ENCODE measurements at regions of chr10 and their contacts with region 1.

Region 1: DNA sequence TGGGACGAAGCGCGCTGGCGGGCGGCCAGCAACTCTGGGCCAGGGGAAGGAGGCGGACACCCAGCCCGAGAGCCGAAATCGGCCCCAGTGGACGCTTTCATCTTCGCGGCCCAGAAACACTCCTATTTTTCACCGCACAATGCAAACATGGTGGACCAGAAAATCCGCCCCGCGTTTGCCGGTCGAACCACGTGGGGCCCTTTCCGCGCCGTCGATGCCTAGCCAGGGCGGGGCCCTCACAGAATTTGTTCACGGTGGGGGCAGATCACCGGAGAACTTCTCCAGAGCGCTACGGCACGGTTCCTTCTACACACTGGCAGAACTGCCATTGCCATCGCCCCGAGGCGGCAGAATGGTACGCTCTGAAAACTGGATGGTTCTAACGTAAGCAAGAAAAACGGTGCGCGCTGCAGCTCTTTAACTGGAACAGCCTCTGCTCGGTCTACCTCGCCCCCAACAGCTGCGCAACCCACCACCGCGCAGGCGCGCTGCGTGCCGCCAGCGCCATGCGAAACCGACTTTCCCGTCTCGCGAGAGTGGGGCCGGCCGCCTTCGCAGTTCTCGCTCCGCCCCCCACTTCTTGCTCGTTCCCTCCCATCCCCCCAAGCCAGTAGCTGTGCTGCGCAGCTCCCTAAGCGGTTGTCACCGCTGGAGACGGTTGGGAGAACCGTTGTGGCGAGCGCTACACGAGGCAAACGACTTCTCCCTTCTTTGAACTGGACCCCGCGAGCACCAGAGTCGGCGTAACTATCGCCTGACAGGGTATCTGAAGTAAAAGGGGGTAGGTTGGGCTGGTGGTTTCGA is at the start of gene HNRNPH3:
- DNase-seq: peak; percentile 97 to 100 (median 98)
- ATAC-seq: peak; percentile 78
- H3K4me3 ChIP-seq: peak within 1 kb of the TSS; percentile 95
- H3K4me3 Mint-ChIP-seq: peak within 1 kb of the TSS; percentile 100
- H3K27ac ChIP-seq: peak within 1 kb of the TSS; percentile 94 to 97
- H3K27ac Mint-ChIP-seq: peak within 1 kb of the TSS; percentile 98
- H3K4me1 ChIP-seq: peaks cover 18% of the 10 kb centered on the region
- H3K4me1 Mint-ChIP-seq: peaks cover 52% of the 10 kb centered on the region
- H3K27me3 ChIP-seq: no peaks in the 10 kb centered on the region
- H3K27me3 Mint-ChIP-seq: no peaks in the 10 kb centered on the region
- CTCF ChIP-seq: no peak
- total RNA-seq, gene HNRNPH3: 227 to 228 TPM

Region 2: DNA sequence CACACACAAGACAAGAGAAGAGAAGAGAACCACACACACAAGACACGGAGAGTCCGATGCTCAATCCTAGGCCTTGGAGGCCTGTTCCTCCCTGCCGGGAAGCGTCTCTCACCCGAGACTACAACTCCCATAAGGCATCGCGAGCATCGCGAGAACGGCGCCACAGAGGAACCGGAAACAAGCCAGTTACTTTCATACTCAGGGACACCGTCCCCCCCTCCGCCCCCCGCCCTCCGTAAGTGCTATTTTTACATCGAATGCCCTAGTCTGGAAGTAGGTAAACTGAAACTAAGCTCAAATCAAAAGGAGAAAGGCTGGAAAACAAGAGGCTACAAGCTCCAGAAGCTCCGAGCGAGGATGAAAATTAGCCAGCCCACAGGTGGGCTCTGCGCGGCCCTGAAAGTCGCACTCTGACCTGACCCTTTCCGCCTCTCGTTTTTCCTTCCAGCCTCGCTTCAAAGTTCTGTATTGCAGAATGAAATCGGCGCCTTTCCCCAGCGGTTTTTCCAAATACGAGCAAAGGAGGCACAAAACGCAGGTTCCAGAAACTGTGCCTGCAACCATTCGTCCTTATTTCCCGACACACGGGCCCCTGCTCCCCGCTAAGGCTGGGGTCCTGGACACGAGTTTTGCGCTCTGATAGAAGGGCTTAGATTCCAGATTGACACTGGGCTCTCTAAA is 482.2 kb before region 1 on chr10:
- CTCF ChIA-PET with region 1: no interaction called
- POLR2A ChIA-PET with region 1: interaction called, 9 read pairs
- intact Hi-C with region 1: loop called in 1 of 2 experiments (anchors 5 kb)
- DNase-seq: peak; percentile 87 to 96 (median 93)
- ATAC-seq: peak; percentile 99
- H3K4me3 ChIP-seq: peak overlapping the region; percentile 91
- H3K4me3 Mint-ChIP-seq: peak overlapping the region; percentile 94
- H3K27ac ChIP-seq: peak overlapping the region; percentile 78 to 93
- H3K27ac Mint-ChIP-seq: peak overlapping the region; percentile 91
- H3K4me1 ChIP-seq: peaks cover 12% of the 10 kb centered on the region
- H3K4me1 Mint-ChIP-seq: peaks cover 9% of the 10 kb centered on the region
- H3K27me3 ChIP-seq: no peaks in the 10 kb centered on the region
- H3K27me3 Mint-ChIP-seq: no peaks in the 10 kb centered on the region
- CTCF ChIP-seq: no peak

Region 3: DNA sequence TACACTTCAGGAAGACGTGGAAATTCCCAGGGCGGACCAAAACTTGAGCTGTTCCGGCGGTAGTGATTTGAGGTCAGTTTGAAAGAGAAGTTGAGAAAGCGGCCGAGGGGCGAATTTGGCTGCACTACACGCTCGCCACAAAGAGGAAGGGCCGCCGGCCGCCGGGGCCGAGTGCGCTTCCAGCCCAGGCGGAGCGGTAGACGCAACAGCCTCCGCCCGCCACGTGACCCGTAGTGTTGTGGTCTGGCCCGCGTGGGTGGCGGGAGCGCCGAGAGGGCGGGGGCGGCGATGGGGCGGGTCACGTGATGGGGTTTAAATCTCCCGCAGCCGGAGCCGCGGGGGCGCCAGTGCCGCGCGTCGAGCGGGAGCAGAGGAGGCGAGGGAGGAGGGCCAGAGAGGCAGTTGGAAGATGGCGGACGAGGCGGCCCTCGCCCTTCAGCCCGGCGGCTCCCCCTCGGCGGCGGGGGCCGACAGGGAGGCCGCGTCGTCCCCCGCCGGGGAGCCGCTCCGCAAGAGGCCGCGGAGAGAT is 447.3 kb before region 1 on chr10 and contains the start of gene SIRT1:
- CTCF ChIA-PET with region 1: no interaction called
- POLR2A ChIA-PET with region 1: interaction called, 50 read pairs
- intact Hi-C with region 1: loop called in 1 of 2 experiments (anchors 2 kb)
- DNase-seq: peak; percentile 88 to 97 (median 92)
- ATAC-seq: peak; percentile 70
- H3K4me3 ChIP-seq: peak within 1 kb of the TSS; percentile 87
- H3K4me3 Mint-ChIP-seq: peak within 1 kb of the TSS; percentile 95
- H3K27ac ChIP-seq: peak within 1 kb of the TSS; percentile 78 to 82
- H3K27ac Mint-ChIP-seq: peak within 1 kb of the TSS; percentile 91
- H3K4me1 ChIP-seq: peaks cover 24% of the 10 kb centered on the region
- H3K4me1 Mint-ChIP-seq: peaks cover 46% of the 10 kb centered on the region
- H3K27me3 ChIP-seq: no peaks in the 10 kb centered on the region
- H3K27me3 Mint-ChIP-seq: no peaks in the 10 kb centered on the region
- CTCF ChIP-seq: no peak
- total RNA-seq, gene SIRT1: 57.6 to 62.9 TPM

Region 4: GRCh38 chr10:68315582-68315981 is 16.1 kb before region 1 on chr10:
- CTCF ChIA-PET with region 1: no interaction called
- POLR2A ChIA-PET with region 1: interaction called, 27 read pairs
- intact Hi-C with region 1: no loop called
- DNase-seq: no peak
- ATAC-seq: no peak
- H3K4me3 ChIP-seq: no peak overlapping the region
- H3K4me3 Mint-ChIP-seq: no peak overlapping the region
- H3K27ac ChIP-seq: no peak overlapping the region
- H3K27ac Mint-ChIP-seq: no peak overlapping the region
- H3K4me1 ChIP-seq: peaks cover 6% of the 10 kb centered on the region
- H3K4me1 Mint-ChIP-seq: peaks cover 7% of the 10 kb centered on the region
- H3K27me3 ChIP-seq: no peaks in the 10 kb centered on the region
- H3K27me3 Mint-ChIP-seq: no peaks in the 10 kb centered on the region
- CTCF ChIP-seq: no peak

Region 5: DNA sequence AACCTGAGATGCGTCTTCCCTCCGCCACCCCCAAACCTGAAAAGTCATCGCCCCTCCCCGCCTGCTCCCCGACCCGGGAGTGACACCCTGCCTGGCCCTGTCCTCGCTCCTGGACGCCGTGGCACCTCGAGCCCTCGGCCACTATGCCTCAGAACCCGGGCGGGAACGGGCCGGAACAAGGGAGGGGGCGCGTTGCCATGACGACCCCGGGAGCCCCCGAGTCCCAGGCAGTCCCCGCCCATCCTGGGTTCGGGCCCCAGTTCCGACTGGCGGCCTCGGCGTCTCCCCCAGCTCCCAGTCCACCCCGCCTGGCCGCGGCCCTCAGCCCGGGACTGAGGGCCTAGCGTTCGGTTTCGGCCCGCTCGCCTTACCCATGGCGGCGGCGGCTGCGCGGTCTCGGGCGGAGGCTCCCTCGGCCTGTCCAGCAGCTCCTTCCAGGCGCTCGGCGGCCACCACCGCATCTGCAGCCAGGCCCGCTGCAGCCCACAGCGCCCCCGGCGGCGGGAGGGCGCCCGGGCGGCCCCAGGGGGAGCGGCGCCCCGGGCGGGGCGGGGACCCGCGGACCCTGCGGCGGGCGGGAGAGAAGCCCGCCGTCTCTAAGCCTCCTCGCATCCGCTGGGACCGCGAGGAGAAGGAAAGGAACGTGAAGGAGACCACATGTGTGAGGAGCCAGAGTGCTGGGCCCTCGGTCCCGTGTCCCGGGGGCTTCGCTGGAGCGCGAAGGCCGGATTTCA is 75.3 kb after region 1 on chr10 and contains the start of gene RUFY2:
- CTCF ChIA-PET with region 1: interaction called, 7 read pairs
- POLR2A ChIA-PET with region 1: interaction called, 16 read pairs
- intact Hi-C with region 1: loop called in 1 of 2 experiments (anchors 5 kb)
- DNase-seq: peak; percentile 42 to 88 (median 70)
- ATAC-seq: peak; percentile 94
- H3K4me3 ChIP-seq: peak within 1 kb of the TSS; percentile 99
- H3K4me3 Mint-ChIP-seq: peak within 1 kb of the TSS; percentile 89
- H3K27ac ChIP-seq: peak within 1 kb of the TSS in 1 of 2 donors; percentile 35
- H3K27ac Mint-ChIP-seq: peak within 1 kb of the TSS; percentile 53
- H3K4me1 ChIP-seq: peaks cover 11% of the 10 kb centered on the region
- H3K4me1 Mint-ChIP-seq: peaks cover 18% of the 10 kb centered on the region
- H3K27me3 ChIP-seq: no peaks in the 10 kb centered on the region
- H3K27me3 Mint-ChIP-seq: no peaks in the 10 kb centered on the region
- CTCF ChIP-seq: peak; percentile 57
- total RNA-seq, gene RUFY2: 10.7 to 14.8 TPM

Region 6: DNA sequence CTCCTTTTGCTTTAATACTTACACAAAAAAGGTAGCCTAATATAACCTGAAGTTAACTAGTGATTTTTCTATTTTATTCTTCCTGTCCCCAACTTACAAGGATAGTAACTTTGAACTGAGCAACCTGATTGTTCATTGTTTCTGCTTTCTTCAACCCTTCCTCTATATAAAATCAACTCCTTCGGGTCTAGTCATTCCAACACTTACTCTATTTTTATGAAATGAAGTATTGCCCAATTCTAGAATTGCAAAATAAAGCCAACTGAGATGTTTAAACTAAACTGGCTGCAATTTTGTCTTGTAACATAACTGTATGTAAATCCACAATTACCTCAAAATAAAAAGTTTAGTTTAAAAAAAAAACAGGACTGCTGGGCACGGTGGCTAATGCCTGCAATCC is 160.5 kb after region 1 on chr10:
- CTCF ChIA-PET with region 1: no interaction called
- POLR2A ChIA-PET with region 1: no interaction called
- intact Hi-C with region 1: no loop called
- DNase-seq: no peak
- ATAC-seq: no peak
- H3K4me3 ChIP-seq: no peak overlapping the region
- H3K4me3 Mint-ChIP-seq: no peak overlapping the region
- H3K27ac ChIP-seq: no peak overlapping the region
- H3K27ac Mint-ChIP-seq: no peak overlapping the region
- H3K4me1 ChIP-seq: no peaks in the 10 kb centered on the region
- H3K4me1 Mint-ChIP-seq: no peaks in the 10 kb centered on the region
- H3K27me3 ChIP-seq: no peaks in the 10 kb centered on the region
- H3K27me3 Mint-ChIP-seq: no peaks in the 10 kb centered on the region
- CTCF ChIP-seq: no peak

Region 7: DNA sequence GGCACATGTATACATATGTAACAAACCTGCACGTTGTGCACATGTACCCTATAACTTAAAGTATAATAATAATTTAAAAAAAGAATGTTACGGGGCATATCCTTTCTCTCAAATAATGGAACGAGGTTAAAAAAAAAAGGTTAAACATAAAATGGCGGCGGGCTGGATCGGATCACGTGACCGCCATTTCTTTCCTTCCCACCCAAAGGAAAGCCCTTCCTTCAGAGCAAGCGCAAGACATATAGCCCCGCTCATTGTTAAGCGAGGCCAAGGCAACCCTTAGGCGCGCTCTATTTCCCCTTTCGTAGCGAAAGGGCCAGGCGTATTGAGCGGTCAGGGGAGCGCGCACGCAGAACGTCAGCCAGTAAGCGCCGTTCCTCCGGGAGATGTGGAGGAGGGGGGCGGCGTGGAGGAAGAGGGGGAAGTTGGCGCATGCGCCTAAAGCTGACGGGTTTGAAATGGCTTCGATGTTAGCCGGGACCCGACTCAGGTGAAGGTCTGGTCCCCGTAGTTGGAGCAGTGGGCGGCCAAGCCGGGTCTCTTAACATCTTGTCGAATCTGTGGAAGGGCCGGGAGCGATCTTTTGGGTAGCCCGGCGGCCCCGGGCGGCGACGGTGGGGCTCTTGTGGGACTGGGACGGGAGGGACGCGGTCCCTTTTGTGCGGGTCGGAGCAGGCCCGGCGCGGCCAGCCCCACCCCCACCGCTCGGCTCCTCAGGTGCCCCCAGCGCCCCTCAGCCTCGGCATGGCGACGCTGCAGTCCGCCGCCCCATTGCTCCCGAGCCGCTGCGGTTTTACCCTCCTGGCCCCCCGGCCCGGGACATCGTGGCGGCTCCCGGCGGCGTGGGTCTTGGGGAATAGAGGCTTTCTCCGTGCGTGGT is 389.4 kb after region 1 on chr10 and contains the start of gene CCAR1:
- CTCF ChIA-PET with region 1: no interaction called
- POLR2A ChIA-PET with region 1: interaction called, 16 read pairs
- intact Hi-C with region 1: loop called (anchors 5 kb)
- DNase-seq: peak; percentile 92 to 99 (median 96)
- ATAC-seq: peak; percentile 94
- H3K4me3 ChIP-seq: peak within 1 kb of the TSS; percentile 93
- H3K4me3 Mint-ChIP-seq: peak within 1 kb of the TSS; percentile 100
- H3K27ac ChIP-seq: peak within 1 kb of the TSS; percentile 85 to 89
- H3K27ac Mint-ChIP-seq: peak within 1 kb of the TSS; percentile 98
- H3K4me1 ChIP-seq: peaks cover 16% of the 10 kb centered on the region
- H3K4me1 Mint-ChIP-seq: peaks cover 16% of the 10 kb centered on the region
- H3K27me3 ChIP-seq: no peaks in the 10 kb centered on the region
- H3K27me3 Mint-ChIP-seq: no peaks in the 10 kb centered on the region
- CTCF ChIP-seq: no peak
- total RNA-seq, gene CCAR1: 68.9 to 82.2 TPM

Region 8: DNA sequence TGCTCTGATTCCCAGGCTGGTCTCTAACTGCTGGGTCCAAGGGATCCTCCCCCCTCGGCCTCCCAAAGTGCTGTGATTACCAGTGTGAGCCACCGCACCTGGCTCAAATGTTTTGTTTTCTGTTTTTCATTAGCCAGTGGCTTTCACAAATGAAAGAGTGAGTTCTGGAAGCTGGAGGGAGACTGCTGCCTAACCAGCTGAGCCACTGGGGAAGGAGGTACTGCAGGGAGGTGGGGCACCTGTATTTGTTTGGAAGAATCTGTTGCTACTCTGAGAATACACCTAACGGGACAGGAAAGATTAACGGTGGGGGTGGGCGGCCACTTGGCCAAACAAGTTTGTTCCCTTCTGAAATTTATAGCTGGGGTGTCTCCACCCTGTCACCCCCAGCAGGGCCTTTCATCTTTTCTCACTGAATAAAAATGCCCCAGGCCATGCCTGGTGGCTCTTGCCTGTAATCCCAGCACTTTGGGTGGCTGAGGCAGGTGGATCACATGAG is 500.4 kb after region 1 on chr10:
- CTCF ChIA-PET with region 1: no interaction called
- POLR2A ChIA-PET with region 1: no interaction called
- intact Hi-C with region 1: no loop called
- DNase-seq: no peak
- ATAC-seq: no peak
- H3K4me3 ChIP-seq: no peak overlapping the region
- H3K4me3 Mint-ChIP-seq: no peak overlapping the region
- H3K27ac ChIP-seq: no peak overlapping the region
- H3K27ac Mint-ChIP-seq: no peak overlapping the region
- H3K4me1 ChIP-seq: peaks cover 20% of the 10 kb centered on the region
- H3K4me1 Mint-ChIP-seq: peaks cover 19% of the 10 kb centered on the region
- H3K27me3 ChIP-seq: no peaks in the 10 kb centered on the region
- H3K27me3 Mint-ChIP-seq: no peaks in the 10 kb centered on the region
- CTCF ChIP-seq: no peak

Measured in CD4-positive, alpha-beta T cell (primary cell).